PC-9 (cell line): ENCODE measurements at regions of chr3 and their contacts with region 1.

Region 1: DNA sequence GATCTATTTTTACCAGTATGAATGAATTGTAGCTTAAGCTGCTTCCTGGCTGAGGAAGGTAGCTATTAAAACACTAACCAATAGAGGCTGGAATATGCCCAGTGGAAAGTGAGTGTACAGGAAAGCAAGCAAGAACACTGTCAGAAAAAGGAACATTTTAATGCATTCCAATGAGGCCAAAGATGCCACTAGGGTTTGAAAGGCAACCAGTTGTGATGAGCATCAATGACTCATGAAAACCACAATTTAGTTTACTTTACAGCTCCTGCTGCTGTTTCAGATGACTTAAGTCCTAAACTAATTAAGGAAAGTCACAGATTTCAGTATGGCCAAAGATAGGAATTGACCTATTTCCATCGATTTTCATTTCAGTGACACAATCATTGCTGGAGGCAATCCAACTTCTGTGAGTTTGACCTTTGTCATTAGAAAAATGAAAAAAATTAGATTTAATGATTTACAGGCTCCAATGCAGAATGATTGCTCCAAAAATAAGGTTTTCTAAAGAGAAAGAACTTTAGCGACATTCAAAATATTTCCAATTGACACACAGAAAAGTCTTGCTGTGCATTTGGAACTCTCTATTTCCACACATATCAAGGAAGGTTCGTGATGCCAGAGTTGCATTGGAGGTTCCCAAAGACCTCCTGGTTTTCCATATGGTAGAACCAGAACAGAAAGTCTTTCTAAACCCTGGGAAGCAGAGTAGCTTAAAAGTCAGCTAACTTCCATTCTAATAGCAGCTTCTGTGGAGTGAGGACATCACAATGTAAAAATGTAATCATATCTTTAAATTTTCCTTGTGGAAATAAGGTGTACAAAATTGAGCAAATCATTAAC is 103.0 kb downstream of the SUCNR1 start:
- DNase-seq: peak; percentile 49 to 93
- H3K4me3 ChIP-seq: peak overlapping the region; percentile 8; the same call in 1 of the 2 replicates
- H3K27ac ChIP-seq: peak overlapping the region; percentile 42
- H3K4me1 ChIP-seq: peaks cover 16% of the 10 kb centered on the region
- H3K27me3 ChIP-seq: no peaks in the 10 kb centered on the region
- CTCF ChIP-seq: no peak

Region 2: GRCh38 chr3:151852074-151852811 is 124.2 kb before region 1 on chr3:
- CTCF ChIA-PET with region 1: no interaction called
- POLR2A ChIA-PET with region 1: no interaction called
- intact Hi-C with region 1: no loop called
- DNase-seq: no peak
- H3K4me3 ChIP-seq: no peak overlapping the region
- H3K27ac ChIP-seq: no peak overlapping the region
- H3K4me1 ChIP-seq: no peaks in the 10 kb centered on the region
- H3K27me3 ChIP-seq: no peaks in the 10 kb centered on the region
- CTCF ChIP-seq: no peak

Region 3: DNA sequence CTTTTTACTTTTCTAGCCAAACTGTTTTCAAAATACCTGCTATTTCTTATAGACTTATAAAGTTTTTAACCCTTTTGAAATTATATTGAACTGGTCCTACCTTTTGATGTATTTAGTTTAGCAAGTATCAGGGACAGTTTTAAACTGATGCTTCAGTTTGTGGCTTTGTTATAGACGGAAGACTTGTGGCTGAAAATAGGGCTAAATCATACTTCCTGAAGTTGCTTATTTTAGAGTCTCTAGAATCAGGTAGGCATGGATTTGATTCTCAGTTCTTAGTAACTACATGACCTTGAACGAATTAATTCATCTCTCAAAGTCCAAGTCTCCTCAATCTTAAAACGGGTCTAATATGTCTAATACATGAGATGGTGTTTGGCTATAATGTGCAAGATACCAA is 1508.4 kb after region 1 on chr3:
- CTCF ChIA-PET with region 1: no interaction called
- POLR2A ChIA-PET with region 1: interaction called, 19 read pairs
- intact Hi-C with region 1: no loop called
- DNase-seq: no peak
- H3K4me3 ChIP-seq: no peak overlapping the region
- H3K27ac ChIP-seq: no peak overlapping the region
- H3K4me1 ChIP-seq: no peaks in the 10 kb centered on the region
- H3K27me3 ChIP-seq: no peaks in the 10 kb centered on the region
- CTCF ChIP-seq: no peak